A549 (cell line): ENCODE measurements at regions of chr12 and their contacts with region 1.

Region 1: DNA sequence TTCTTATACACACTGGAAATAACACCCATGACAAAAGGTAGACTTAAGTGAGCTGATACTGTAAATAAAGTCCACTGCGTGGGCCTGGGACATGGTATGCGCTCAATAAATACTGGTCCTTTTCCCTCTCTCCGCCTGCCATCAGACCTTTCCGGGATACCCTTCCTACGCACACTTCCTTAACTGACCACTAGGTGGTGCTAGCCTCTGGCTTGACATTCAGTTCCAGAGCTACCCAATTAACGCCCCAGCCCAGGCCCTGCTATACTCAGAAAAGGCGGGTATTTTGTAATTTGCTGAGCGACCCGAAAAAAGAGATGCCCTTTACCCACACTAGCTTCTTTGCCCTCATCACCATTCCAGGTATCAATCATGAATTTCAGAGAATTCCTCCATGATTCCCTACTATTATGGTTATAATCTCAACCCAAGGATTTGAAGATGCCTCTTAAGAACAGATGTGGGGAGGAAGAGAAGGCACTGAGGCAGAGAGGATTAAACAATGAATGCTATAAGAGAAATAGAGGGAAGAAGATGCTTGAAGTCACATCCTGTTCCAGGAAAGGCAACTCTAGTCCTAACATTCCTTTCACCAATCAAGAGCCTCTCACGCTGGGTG is 3.9 kb upstream of the LRP1 start:
- DNase-seq: peak; percentile 77 to 84
- ATAC-seq: peak; percentile 46 to 61; a peak in 3 of 6 replicates
- H3K4me3 ChIP-seq: no peak overlapping the region
- H3K27ac ChIP-seq: no peak overlapping the region
- H3K4me1 ChIP-seq: peaks cover 10% of the 10 kb centered on the region; the same call in 2 of the 3 replicates
- CTCF ChIP-seq: peak; percentile 94
- EP300 ChIP-seq: no peak
- POLR2A ChIP-seq: no peak
- RAD21 ChIP-seq: peak; percentile 86 to 92

Region 2: DNA sequence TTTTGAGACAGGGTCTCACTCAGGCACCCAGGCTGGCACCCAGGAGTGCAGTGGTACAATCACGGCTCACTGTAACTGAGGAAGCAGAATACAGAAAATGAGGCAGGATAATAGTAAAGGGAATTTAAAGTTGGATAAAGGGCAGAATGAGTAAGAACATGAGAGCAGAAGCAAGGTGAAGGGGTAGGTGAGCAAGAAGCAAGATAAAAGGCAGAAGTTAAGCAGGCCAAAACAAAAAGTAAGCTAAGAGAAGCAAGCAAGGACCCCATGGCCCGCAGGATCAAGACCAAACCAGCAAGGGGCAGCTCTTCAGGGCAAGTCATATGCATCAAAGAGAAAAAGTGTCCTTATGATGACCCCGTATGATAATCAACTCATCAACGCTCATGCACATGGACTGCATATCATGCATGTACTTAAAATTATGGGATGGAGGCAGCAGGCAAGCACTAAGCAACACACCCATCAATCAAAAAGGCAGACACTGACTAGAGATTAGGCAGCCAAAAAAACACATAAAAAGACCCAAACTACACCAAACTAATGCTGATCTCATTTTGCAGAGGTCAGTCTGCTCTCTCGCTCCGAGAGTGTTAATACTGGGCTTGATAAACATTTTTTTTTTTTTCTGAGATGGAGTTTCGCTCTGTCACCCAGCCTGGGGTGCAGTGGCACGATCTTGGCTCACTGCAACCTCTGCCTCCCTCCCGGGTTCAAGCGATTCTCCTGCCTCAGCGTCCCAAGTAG is 686.8 kb before region 1 on chr12:
- CTCF ChIA-PET with region 1: no interaction called
- POLR2A ChIA-PET with region 1: interaction called, 11 read pairs
- DNase-seq: no peak
- ATAC-seq: no peak
- H3K4me3 ChIP-seq: no peak overlapping the region
- H3K27ac ChIP-seq: no peak overlapping the region
- H3K4me1 ChIP-seq: no peaks in the 10 kb centered on the region
- CTCF ChIP-seq: no peak
- EP300 ChIP-seq: no peak
- POLR2A ChIP-seq: no peak
- RAD21 ChIP-seq: no peak

Region 3: GRCh38 chr12:57096099-57096572 is 28.2 kb before region 1 on chr12:
- CTCF ChIA-PET with region 1: interaction called, 12 read pairs
- POLR2A ChIA-PET with region 1: no interaction called
- DNase-seq: no peak
- ATAC-seq: peak in 1 of 2 experiments; percentile 14; a peak in 3 of 6 replicates
- H3K4me3 ChIP-seq: no peak overlapping the region
- H3K27ac ChIP-seq: no peak overlapping the region
- H3K4me1 ChIP-seq: 0 out of 3 replicates have a peak, but pooled peaks cover 4% of the 10 kb centered on the region
- CTCF ChIP-seq: no peak
- EP300 ChIP-seq: no peak
- POLR2A ChIP-seq: no peak
- RAD21 ChIP-seq: no peak

Region 4: DNA sequence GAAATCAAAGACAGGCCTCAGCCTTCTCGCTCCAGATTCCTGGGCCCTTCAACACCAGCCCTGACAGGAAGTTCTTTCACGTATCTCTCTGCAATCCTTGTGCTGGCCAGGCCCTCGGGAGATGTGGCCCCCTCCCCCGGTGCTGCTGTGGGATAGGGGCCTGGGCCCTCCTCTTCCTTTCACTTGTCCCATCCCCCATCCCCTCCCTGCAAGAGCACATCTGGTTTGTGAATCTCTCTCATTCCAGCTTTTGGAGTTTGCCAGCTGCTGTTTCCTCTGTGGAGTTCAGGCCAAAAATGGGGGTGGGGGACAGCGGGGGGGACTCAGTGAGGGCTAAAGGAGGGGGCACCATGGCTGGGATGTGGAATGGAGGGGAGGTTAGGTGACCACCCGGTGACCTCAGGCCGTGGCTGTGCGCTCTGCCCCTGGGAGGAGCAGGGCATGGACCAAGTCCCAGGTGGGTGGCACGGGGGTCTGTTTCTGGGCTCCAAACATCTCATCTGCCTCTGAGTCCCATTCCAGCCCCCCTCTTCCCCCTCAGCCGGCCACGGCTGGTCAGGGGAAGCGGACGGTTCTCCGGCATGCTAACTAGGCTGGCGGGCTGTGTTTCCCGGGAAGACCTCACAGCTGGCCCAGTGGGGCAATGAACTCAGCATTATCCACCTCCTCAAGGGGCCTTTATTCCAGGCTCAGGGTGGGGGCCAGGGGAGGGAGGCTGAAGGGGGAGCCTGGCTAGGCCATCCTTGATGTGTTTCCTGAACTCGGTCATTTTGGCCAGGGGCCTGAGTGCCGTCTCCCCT is 11.4 kb after region 1 on chr12:
- CTCF ChIA-PET with region 1: interaction called, 51 read pairs
- POLR2A ChIA-PET with region 1: interaction called, 4 read pairs
- DNase-seq: no peak
- ATAC-seq: no peak
- H3K4me3 ChIP-seq: no peak overlapping the region
- H3K27ac ChIP-seq: peak overlapping the region in 1 of 2 experiments; percentile 45; a peak in 3 of 6 replicates
- H3K4me1 ChIP-seq: peaks cover 34% of the 10 kb centered on the region
- CTCF ChIP-seq: no peak
- EP300 ChIP-seq: no peak
- POLR2A ChIP-seq: no peak
- RAD21 ChIP-seq: no peak

Region 5: DNA sequence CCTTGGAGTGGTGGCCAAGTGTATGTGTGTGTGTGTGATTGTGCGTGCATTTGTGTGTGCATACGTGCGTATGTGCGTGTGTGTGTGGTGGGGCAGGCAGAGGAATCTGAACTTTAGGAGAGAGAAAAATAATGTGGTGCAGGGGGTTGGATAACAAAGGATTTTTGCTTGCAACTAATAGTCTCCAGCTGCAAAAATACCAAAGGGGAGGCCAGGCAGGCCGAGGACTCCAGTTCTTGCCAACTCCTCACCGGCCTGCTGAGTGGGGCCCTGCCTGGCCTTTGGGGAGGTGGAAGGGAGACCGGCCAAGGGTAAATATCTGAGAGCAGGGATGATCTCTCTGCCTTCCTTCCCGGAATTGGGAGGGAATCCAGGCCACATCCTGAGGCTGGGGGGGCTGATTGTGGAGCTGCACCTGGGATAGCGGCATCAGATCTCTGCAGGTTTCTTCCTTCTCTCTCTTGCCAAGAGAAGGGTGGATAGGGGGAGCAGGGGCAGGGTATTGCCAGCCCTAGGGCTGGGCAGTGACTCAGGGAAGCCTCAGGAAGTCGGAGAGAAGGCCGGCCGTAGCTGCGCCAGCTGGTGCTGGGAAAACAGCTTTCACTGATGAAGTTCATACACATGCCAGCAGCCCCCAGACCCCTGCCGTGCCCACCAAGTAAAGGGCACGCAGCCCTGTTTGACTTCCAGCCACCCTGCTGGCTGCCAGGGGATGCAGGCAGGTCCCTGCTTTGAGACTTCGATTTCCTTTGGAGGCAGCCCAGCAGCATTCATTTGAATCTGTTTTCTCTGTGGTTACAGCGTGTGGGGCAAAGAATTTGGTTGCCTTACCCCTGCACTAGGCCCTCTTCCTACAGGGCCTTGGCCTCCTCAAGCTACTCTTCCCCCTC is 27.6 kb after region 1 on chr12:
- CTCF ChIA-PET with region 1: interaction called, 54 read pairs
- POLR2A ChIA-PET with region 1: interaction called, 3 read pairs
- DNase-seq: no peak
- ATAC-seq: peak in 1 of 2 experiments; percentile 12; a peak in 1 of 6 replicates
- H3K4me3 ChIP-seq: no peak overlapping the region
- H3K27ac ChIP-seq: no peak overlapping the region
- H3K4me1 ChIP-seq: peaks cover 24% of the 10 kb centered on the region
- CTCF ChIP-seq: no peak
- EP300 ChIP-seq: no peak
- POLR2A ChIP-seq: no peak
- RAD21 ChIP-seq: no peak

Region 6: DNA sequence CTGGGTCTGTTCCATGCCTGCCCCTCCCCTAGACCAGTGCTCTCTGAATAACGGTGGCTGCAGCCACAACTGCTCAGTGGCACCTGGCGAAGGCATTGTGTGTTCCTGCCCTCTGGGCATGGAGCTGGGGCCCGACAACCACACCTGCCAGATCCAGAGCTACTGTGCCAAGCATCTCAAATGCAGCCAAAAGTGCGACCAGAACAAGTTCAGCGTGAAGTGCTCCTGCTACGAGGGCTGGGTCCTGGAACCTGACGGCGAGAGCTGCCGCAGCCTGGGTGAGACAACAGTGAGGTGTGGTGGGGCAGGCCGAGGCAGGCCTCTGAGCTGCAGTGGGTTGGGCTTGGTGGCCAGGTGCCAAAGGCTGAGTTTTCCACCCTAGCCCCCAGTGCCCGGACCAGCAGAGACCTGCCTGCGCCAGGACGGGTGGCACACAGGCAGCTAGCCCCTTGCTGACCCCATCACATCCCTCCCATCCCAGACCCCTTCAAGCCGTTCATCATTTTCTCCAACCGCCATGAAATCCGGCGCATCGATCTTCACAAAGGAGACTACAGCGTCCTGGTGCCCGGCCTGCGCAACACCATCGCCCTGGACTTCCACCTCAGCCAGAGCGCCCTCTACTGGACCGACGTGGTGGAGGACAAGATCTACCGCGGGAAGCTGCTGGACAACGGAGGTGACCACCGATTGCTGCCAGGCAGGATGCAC is 51.2 kb after region 1 on chr12:
- CTCF ChIA-PET with region 1: interaction called, 1,152 read pairs
- POLR2A ChIA-PET with region 1: interaction called, 16 read pairs
- DNase-seq: peak; percentile 79 to 88
- ATAC-seq: peak; percentile 67 to 90
- H3K4me3 ChIP-seq: no peak overlapping the region
- H3K27ac ChIP-seq: peak overlapping the region; percentile 28 to 64; a peak in 3 of 6 replicates
- H3K4me1 ChIP-seq: peaks cover 16% of the 10 kb centered on the region; the same call in 2 of the 3 replicates
- CTCF ChIP-seq: peak; percentile 83
- EP300 ChIP-seq: no peak
- POLR2A ChIP-seq: no peak
- RAD21 ChIP-seq: peak; percentile 72 to 75

Region 7: GRCh38 chr12:57195611-57196371 is 71.4 kb after region 1 on chr12:
- CTCF ChIA-PET with region 1: interaction called, 1,152 read pairs
- POLR2A ChIA-PET with region 1: no interaction called
- DNase-seq: no peak
- ATAC-seq: peak in 1 of 2 experiments; percentile 7; a peak in 3 of 6 replicates
- H3K4me3 ChIP-seq: no peak overlapping the region
- H3K27ac ChIP-seq: no peak overlapping the region
- H3K4me1 ChIP-seq: no peaks in the 10 kb centered on the region
- CTCF ChIP-seq: no peak
- EP300 ChIP-seq: no peak
- POLR2A ChIP-seq: no peak; the same call in 1 of the 2 replicates
- RAD21 ChIP-seq: no peak